ENCODE measurements at regions of chr10 and their contacts with region 1.

Region 1: GRCh38 chr10:112235920-112236319 is 47.3 kb upstream of the TECTB start:
- DNase-seq: peak; percentile 77
- H3K4me3 ChIP-seq: no peak overlapping the region
- H3K27ac ChIP-seq: no peak overlapping the region
- H3K4me1 ChIP-seq: peaks cover 17% of the 10 kb centered on the region
- H3K27me3 ChIP-seq: no peaks in the 10 kb centered on the region
- CTCF ChIP-seq: no peak

Region 2: GRCh38 chr10:110979636-110980144 is 1256.2 kb before region 1 on chr10:
- CTCF ChIA-PET with region 1: interaction called, 12 read pairs
- dilution Hi-C with region 1: no loop called
- in situ Hi-C with region 1: no loop called
- intact Hi-C with region 1: no loop called
- DNase-seq: no peak
- H3K4me3 ChIP-seq: no peak overlapping the region
- H3K27ac ChIP-seq: no peak overlapping the region
- H3K4me1 ChIP-seq: no peaks in the 10 kb centered on the region
- H3K27me3 ChIP-seq: no peaks in the 10 kb centered on the region
- CTCF ChIP-seq: no peak

Region 3: GRCh38 chr10:111551001-111551400 is 684.9 kb before region 1 on chr10:
- CTCF ChIA-PET with region 1: no interaction called
- dilution Hi-C with region 1: no loop called
- in situ Hi-C with region 1: no loop called
- intact Hi-C with region 1: no loop called
- DNase-seq: no peak
- H3K4me3 ChIP-seq: no peak overlapping the region
- H3K27ac ChIP-seq: no peak overlapping the region
- H3K4me1 ChIP-seq: no peaks in the 10 kb centered on the region
- H3K27me3 ChIP-seq: no peaks in the 10 kb centered on the region
- CTCF ChIP-seq: no peak

Region 4: DNA sequence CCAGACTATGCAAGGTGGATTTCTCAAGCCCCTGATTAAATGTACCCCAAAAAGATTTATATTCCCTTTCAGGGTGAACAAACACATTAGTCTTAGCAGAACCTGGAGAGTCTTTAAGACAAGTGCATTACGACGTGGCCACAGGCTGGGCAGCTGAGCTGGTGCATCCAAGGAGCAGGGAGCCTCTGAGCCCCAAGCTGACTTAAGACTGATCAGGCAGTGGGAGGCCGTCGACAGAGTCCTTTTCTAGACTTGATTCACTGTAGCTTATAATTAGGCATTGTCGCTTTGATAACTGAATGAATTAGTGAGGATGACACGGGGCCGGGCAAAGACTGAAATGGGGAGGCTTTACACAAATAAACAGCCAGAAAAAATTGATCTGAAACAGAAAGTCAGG is 405.6 kb before region 1 on chr10:
- CTCF ChIA-PET with region 1: no interaction called
- dilution Hi-C with region 1: no loop called
- in situ Hi-C with region 1: no loop called
- intact Hi-C with region 1: no loop called
- DNase-seq: no peak
- H3K4me3 ChIP-seq: no peak overlapping the region
- H3K27ac ChIP-seq: no peak overlapping the region
- H3K4me1 ChIP-seq: no peaks in the 10 kb centered on the region
- H3K27me3 ChIP-seq: no peaks in the 10 kb centered on the region
- CTCF ChIP-seq: no peak

Region 5: GRCh38 chr10:112183329-112184051 is 52.4 kb before region 1 on chr10 and contains the start of gene GPAM:
- CTCF ChIA-PET with region 1: no interaction called
- dilution Hi-C with region 1: no loop called
- in situ Hi-C with region 1: no loop called
- intact Hi-C with region 1: loop called (anchors 5 kb)
- DNase-seq: peak; percentile 89
- H3K4me3 ChIP-seq: peak within 1 kb of the TSS; percentile 76 to 92 (median 82)
- H3K27ac ChIP-seq: peak within 1 kb of the TSS; percentile 81
- H3K4me1 ChIP-seq: peaks cover 11% of the 10 kb centered on the region
- H3K27me3 ChIP-seq: no peaks in the 10 kb centered on the region
- CTCF ChIP-seq: no peak
- total RNA-seq, gene GPAM: 9.5 to 17.5 TPM

Region 6: DNA sequence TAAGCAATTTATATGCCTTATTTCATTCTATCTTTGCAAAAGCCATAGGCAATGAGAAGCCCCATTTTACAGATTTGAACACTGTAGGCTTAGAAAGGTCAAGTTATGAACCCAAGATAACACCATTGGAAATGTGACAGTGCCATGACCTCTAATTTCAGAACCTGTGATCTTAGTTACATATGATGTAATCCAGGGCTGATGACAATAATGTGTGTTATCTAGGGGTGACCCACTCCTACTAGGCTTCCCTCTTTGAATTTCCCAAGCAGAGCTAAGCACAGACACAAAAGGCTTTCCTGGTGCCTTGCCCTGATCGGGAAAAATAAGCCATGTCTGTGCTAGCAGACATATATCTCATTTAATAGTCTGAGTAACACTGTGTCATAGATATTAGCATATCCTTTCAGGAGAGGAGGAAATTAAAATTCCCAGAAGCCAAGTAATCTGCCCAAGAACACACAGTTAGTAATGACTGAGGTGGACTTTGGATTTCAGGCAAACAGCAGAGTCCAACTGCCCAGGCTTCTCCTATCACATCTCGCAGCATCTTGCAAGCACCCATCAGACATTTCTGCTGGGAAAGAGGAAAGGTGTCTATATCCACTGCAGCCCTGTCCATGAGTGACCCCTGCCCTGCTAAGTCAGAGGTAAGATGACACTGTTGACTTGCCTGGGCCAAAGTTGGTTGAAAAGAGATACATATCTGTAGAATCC is 44.4 kb after region 1 on chr10:
- CTCF ChIA-PET with region 1: no interaction called
- dilution Hi-C with region 1: no loop called
- in situ Hi-C with region 1: no loop called
- intact Hi-C with region 1: loop called (anchors 5 kb)
- DNase-seq: no peak
- H3K4me3 ChIP-seq: no peak overlapping the region
- H3K27ac ChIP-seq: no peak overlapping the region
- H3K4me1 ChIP-seq: no peaks in the 10 kb centered on the region
- H3K27me3 ChIP-seq: no peaks in the 10 kb centered on the region
- CTCF ChIP-seq: no peak